ENCODE measurements at regions of chr9 and their contacts with region 1.

Region 1: GRCh38 chr9:111362526-111362925 is 32.5 kb upstream of the OR2K2 start:
- DNase-seq: no peak
- H3K4me3 ChIP-seq: no peak overlapping the region
- H3K27ac ChIP-seq: no peak overlapping the region
- H3K4me1 ChIP-seq: no peaks in the 10 kb centered on the region
- H3K27me3 ChIP-seq: no peaks in the 10 kb centered on the region
- CTCF ChIP-seq: no peak
- EP300 ChIP-seq: no peak
- POLR2A ChIP-seq: no peak

Region 2: GRCh38 chr9:111149016-111149759 is 213.3 kb before region 1 on chr9:
- in situ Hi-C with region 1: no loop called
- intact Hi-C with region 1: no loop called
- DNase-seq: no peak
- H3K4me3 ChIP-seq: no peak overlapping the region
- H3K27ac ChIP-seq: peak overlapping the region in 1 of 4 donors; percentile 1
- H3K4me1 ChIP-seq: no peaks in the 10 kb centered on the region
- H3K27me3 ChIP-seq: no peaks in the 10 kb centered on the region
- CTCF ChIP-seq: peak in 1 of 5 experiments; percentile 2
- EP300 ChIP-seq: no peak
- POLR2A ChIP-seq: no peak

Region 3: GRCh38 chr9:111330124-111330523 is 32.4 kb before region 1 on chr9 and contains the start of gene OR2K2:
- in situ Hi-C with region 1: no loop called
- intact Hi-C with region 1: no loop called
- DNase-seq: no peak
- H3K4me3 ChIP-seq: no peak within 1 kb of the TSS
- H3K27ac ChIP-seq: no peak within 1 kb of the TSS
- H3K4me1 ChIP-seq: no peaks in the 10 kb centered on the region
- H3K27me3 ChIP-seq: peaks cover 6% of the 10 kb centered on the region
- CTCF ChIP-seq: no peak
- EP300 ChIP-seq: no peak
- POLR2A ChIP-seq: no peak
- total RNA-seq, gene OR2K2: not detected

Region 4: DNA sequence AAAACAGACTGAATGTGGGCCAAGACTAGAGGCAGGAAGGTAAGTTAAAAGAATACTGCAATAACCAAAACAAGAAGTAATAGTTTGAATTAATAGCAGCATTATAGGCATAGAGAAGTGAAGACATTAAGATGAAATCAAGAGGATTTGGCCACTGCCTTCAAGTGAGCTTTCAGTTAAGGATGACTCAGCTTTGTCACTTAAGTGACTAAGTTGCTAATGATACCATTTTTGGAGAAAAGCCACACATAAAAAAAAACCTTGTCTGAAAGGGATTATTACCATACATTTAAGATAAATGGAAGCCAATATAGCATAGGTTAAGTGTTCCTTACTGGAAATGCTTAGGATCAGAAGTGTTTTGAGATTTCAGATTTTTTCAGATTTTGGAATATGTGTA is 64.7 kb after region 1 on chr9:
- in situ Hi-C with region 1: loop called in 1 of 4 experiments (anchors 10 kb)
- intact Hi-C with region 1: no loop called
- DNase-seq: no peak
- H3K4me3 ChIP-seq: no peak overlapping the region
- H3K27ac ChIP-seq: no peak overlapping the region
- H3K4me1 ChIP-seq: no peaks in the 10 kb centered on the region
- H3K27me3 ChIP-seq: no peaks in the 10 kb centered on the region
- CTCF ChIP-seq: no peak
- EP300 ChIP-seq: no peak
- POLR2A ChIP-seq: no peak

Measured in transverse colon (tissue), 4 donors.